MCF 10A (cell line): ENCODE measurements at regions of chr10 and their contacts with region 1.

Region 1: GRCh38 chr10:98309366-98310355 is 41.7 kb upstream of the LOXL4 start:
- DNase-seq: peak; percentile 69
- H3K4me3 Mint-ChIP-seq: no peak overlapping the region
- H3K27ac Mint-ChIP-seq: no peak overlapping the region
- H3K4me1 Mint-ChIP-seq: peaks cover 6% of the 10 kb centered on the region
- H3K27me3 Mint-ChIP-seq: peaks cover 8% of the 10 kb centered on the region
- CTCF ChIP-seq: peak; percentile 81

Region 2: DNA sequence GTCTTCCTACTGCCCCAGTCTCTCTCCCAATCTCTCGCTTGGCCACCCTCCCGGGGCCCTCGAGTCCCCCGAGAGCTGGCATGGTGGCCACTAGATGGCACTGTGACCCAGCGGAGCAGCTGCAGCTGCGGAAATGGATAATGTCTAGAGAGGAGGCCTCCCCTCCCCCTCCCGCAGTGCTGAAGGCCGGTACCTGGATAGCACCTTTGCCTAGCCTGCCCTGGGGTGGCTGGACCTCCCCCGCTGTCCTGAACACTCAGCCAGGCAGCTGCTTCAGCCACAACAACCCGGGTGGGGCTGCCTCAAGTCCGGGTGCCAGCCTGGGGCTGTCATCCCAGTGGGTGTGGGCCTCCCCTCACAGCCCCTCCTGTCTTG is 394.8 kb before region 1 on chr10:
- CTCF ChIA-PET with region 1: interaction called, 5 read pairs
- POLR2A ChIA-PET with region 1: no interaction called
- intact Hi-C with region 1: loop called (anchors 2 kb)
- DNase-seq: peak; percentile 71
- H3K4me3 Mint-ChIP-seq: no peak overlapping the region
- H3K27ac Mint-ChIP-seq: no peak overlapping the region
- H3K4me1 Mint-ChIP-seq: no peaks in the 10 kb centered on the region
- H3K27me3 Mint-ChIP-seq: peaks cover 51% of the 10 kb centered on the region
- CTCF ChIP-seq: peak; percentile 94

Region 3: DNA sequence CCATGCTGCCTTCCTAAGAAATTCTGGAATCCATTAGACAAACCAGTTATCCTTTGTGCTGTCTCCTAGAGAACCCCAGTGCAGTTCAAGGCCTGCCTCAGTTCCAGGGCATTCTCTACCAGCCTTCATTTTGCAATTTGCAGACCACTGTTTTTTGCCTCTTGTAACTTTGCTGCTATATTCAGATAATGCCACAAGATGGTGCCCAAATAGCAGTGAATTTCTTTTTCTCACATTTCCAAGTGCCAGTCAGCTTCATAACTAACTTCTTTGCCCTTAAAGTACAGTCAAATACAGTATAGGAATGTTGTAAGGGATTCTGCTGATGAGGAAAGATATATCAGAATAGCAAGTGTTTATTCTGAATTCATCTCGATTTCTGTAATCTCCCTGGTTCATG is 66.8 kb before region 1 on chr10:
- CTCF ChIA-PET with region 1: interaction called, 52 read pairs
- POLR2A ChIA-PET with region 1: no interaction called
- intact Hi-C with region 1: loop called (anchors 1 kb)
- DNase-seq: no peak
- H3K4me3 Mint-ChIP-seq: no peak overlapping the region
- H3K27ac Mint-ChIP-seq: peak overlapping the region; percentile 5
- H3K4me1 Mint-ChIP-seq: no peaks in the 10 kb centered on the region
- H3K27me3 Mint-ChIP-seq: no peaks in the 10 kb centered on the region
- CTCF ChIP-seq: peak; percentile 40

Region 4: GRCh38 chr10:98262571-98262970 is 47.1 kb before region 1 on chr10:
- CTCF ChIA-PET with region 1: interaction called, 55 read pairs
- POLR2A ChIA-PET with region 1: interaction called, 6 read pairs
- intact Hi-C with region 1: loop called (anchors 1 kb)
- DNase-seq: peak; percentile 70
- H3K4me3 Mint-ChIP-seq: no peak overlapping the region
- H3K27ac Mint-ChIP-seq: no peak overlapping the region
- H3K4me1 Mint-ChIP-seq: peaks cover 6% of the 10 kb centered on the region
- H3K27me3 Mint-ChIP-seq: no peaks in the 10 kb centered on the region
- CTCF ChIP-seq: peak; percentile 55

Region 5: GRCh38 chr10:98285416-98285815 is 24.2 kb before region 1 on chr10:
- CTCF ChIA-PET with region 1: interaction called, 24 read pairs
- POLR2A ChIA-PET with region 1: no interaction called
- intact Hi-C with region 1: no loop called
- DNase-seq: no peak
- H3K4me3 Mint-ChIP-seq: no peak overlapping the region
- H3K27ac Mint-ChIP-seq: no peak overlapping the region
- H3K4me1 Mint-ChIP-seq: no peaks in the 10 kb centered on the region
- H3K27me3 Mint-ChIP-seq: peaks cover 60% of the 10 kb centered on the region
- CTCF ChIP-seq: no peak

Region 6: GRCh38 chr10:98323221-98324164 is 13.8 kb after region 1 on chr10:
- CTCF ChIA-PET with region 1: interaction called, 17 read pairs
- POLR2A ChIA-PET with region 1: no interaction called
- intact Hi-C with region 1: no loop called
- DNase-seq: peak; percentile 61
- H3K4me3 Mint-ChIP-seq: no peak overlapping the region
- H3K27ac Mint-ChIP-seq: no peak overlapping the region
- H3K4me1 Mint-ChIP-seq: peaks cover 12% of the 10 kb centered on the region
- H3K27me3 Mint-ChIP-seq: no peaks in the 10 kb centered on the region
- CTCF ChIP-seq: no peak